ENCODE measurements at regions of chr5 and their contacts with region 1.

Region 1: DNA sequence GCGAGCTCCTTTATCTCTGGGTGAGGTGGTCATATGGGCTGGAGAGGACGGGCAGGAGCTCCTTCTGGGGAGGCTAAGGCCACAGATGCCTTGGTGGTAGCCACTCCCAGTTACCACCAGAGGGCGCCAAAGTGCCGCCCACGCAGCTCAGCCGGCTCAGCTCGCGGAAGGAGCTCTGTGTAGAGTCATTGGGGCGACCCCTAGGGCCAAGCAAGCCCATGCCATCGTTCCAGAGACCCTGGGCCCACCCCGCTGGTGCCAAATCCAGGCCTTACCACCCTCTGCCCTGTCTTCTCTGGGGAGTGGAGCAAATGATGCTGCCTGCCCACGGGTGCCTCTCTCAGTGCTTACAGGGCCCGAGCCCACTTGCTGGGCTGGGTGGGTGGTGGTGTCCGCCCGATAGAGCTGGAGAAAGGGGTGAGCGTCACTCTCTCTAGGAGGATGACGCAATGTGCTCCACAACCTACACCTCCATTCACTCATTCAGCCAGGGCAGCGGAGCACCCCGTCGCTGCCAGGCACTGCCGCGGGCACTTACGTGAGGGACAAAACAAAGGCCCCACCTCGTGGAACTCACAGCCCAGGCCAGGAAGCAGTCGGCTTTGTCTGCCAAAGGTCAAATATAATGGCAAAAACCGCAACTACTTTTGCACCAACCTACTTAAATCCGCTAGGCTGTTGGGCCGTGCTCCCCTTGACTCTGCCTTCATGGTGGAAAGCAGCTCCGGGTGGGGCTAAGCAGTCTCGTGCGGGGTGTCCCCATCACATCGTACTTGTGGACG is 13.8 kb downstream of the TSPAN17 start:
- H3K4me3 ChIP-seq: no peak overlapping the region
- H3K27ac ChIP-seq: no peak overlapping the region
- H3K4me1 ChIP-seq: no peaks in the 10 kb centered on the region
- CTCF ChIP-seq: peak; percentile 97

Region 2: DNA sequence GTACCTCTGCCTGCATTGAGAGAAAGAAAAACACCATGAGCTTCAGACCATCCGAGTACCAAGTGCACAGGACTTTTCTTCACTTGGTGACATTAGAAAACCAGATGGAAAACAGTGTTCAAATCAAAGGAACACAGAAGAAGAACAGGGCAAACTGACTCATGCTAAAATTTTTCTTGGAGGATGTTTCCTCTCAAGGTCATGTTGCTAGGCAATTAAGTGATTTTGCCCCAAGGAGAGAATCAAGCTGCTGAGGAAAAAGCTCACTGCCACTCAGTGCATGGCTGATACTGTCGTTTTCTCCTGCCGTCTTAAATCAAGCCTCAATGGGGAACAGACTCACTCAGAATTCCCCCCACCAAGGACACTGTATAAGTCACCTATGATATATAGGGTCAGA is 480.7 kb before region 1 on chr5:
- CTCF ChIA-PET with region 1: no interaction called
- POLR2A ChIA-PET with region 1: no interaction called
- H3K4me3 ChIP-seq: no peak overlapping the region
- H3K27ac ChIP-seq: no peak overlapping the region
- H3K4me1 ChIP-seq: peaks cover 7% of the 10 kb centered on the region
- CTCF ChIP-seq: no peak

Region 3: DNA sequence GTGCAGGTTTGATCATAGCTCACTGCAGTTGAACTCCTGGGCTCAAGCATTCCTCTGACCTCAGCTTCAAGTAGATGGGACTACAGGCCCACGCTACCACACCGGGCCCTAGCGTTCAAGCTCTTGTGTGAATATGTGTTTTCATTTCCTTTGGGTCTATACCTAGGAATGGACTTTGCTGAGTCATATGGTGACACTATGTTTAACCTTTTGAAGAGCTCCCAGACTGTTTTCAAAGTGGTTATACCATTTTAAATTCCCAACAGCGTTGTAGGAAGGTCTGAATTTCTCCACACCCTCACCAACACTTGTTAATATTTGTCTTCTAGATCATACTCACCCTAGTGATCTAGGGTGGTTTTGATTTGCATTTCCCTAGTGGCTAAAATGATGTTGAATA is 179.3 kb before region 1 on chr5:
- CTCF ChIA-PET with region 1: no interaction called
- POLR2A ChIA-PET with region 1: no interaction called
- H3K4me3 ChIP-seq: no peak overlapping the region
- H3K27ac ChIP-seq: no peak overlapping the region
- H3K4me1 ChIP-seq: no peaks in the 10 kb centered on the region
- CTCF ChIP-seq: no peak

Region 4: GRCh38 chr5:176519810-176520720 is 141.0 kb before region 1 on chr5:
- CTCF ChIA-PET with region 1: no interaction called
- POLR2A ChIA-PET with region 1: no interaction called
- H3K4me3 ChIP-seq: no peak overlapping the region
- H3K27ac ChIP-seq: no peak overlapping the region
- H3K4me1 ChIP-seq: no peaks in the 10 kb centered on the region
- CTCF ChIP-seq: no peak

Region 5: DNA sequence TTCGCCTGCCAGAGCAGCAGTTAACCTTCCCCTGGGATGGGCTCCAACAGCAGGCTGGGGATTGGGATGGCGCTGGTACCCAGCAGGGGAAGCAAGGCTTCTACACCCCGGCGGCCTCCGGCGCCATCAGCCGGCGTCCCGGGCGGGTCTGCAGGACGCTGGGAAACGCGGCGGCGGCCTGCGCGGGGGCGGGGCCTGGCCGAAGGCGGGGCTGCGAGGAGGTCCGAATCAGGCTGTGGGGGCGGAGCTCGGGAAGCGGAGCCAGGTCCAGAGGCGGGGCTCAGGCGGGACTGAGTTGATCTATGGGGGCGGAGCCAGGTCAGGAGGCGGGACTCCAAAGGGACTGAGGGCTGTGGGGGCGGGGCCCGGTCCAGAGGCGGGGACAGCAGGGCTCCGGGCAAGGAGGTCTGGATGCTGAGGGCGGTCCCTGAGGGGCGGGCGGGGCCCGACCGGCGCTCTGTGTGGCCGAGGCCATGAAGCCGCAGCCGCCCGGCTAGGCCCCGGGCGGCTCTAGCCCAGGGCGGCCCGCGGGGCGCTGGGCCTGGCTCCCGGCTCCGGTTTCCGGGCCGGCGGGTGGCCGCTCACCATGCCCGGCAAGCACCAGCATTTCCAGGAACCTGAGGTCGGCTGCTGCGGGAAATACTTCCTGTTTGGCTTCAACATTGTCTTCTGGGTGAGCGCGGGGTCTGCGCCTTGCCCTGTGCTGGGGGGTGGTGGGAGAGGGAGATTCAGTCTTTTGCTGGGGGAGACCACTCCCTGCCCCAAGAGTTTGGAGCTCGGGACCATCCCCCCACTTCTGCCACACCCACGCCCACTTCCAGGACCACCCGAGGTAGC is 13.8 kb before region 1 on chr5 and contains the start of gene TSPAN17:
- CTCF ChIA-PET with region 1: interaction called, 23 read pairs
- POLR2A ChIA-PET with region 1: interaction called, 7 read pairs
- H3K4me3 ChIP-seq: peak within 1 kb of the TSS; percentile 64
- H3K27ac ChIP-seq: peak within 1 kb of the TSS; percentile 66
- H3K4me1 ChIP-seq: 0 out of 2 replicates have a peak, but pooled peaks cover 2% of the 10 kb centered on the region
- CTCF ChIP-seq: peak; percentile 39; the same call in 1 of the 2 replicates

Region 6: GRCh38 chr5:176748073-176748966 is 87.3 kb after region 1 on chr5:
- CTCF ChIA-PET with region 1: interaction called, 12 read pairs
- POLR2A ChIA-PET with region 1: no interaction called
- H3K4me3 ChIP-seq: no peak overlapping the region
- H3K27ac ChIP-seq: no peak overlapping the region
- H3K4me1 ChIP-seq: no peaks in the 10 kb centered on the region
- CTCF ChIP-seq: no peak

Region 7: GRCh38 chr5:176817841-176818377 is 156.9 kb after region 1 on chr5:
- CTCF ChIA-PET with region 1: interaction called, 25 read pairs
- POLR2A ChIA-PET with region 1: no interaction called
- H3K4me3 ChIP-seq: peak overlapping the region; percentile 36
- H3K27ac ChIP-seq: no peak overlapping the region
- H3K4me1 ChIP-seq: no peaks in the 10 kb centered on the region
- CTCF ChIP-seq: peak; percentile 71

Region 8: GRCh38 chr5:176959051-176959450 is 298.0 kb after region 1 on chr5:
- CTCF ChIA-PET with region 1: interaction called, 39 read pairs
- POLR2A ChIA-PET with region 1: no interaction called
- H3K4me3 ChIP-seq: no peak overlapping the region
- H3K27ac ChIP-seq: no peak overlapping the region
- H3K4me1 ChIP-seq: peaks cover 3% of the 10 kb centered on the region; the same call in 1 of the 2 replicates
- CTCF ChIP-seq: no peak; the same call in 1 of the 2 replicates

Region 9: GRCh38 chr5:177113566-177114424 is 452.7 kb after region 1 on chr5:
- CTCF ChIA-PET with region 1: interaction called, 78 read pairs
- POLR2A ChIA-PET with region 1: no interaction called
- H3K4me3 ChIP-seq: no peak overlapping the region
- H3K27ac ChIP-seq: no peak overlapping the region
- H3K4me1 ChIP-seq: no peaks in the 10 kb centered on the region
- CTCF ChIP-seq: peak; percentile 98